ENCODE measurements at regions of chr1 and their contacts with region 1.

Region 1: DNA sequence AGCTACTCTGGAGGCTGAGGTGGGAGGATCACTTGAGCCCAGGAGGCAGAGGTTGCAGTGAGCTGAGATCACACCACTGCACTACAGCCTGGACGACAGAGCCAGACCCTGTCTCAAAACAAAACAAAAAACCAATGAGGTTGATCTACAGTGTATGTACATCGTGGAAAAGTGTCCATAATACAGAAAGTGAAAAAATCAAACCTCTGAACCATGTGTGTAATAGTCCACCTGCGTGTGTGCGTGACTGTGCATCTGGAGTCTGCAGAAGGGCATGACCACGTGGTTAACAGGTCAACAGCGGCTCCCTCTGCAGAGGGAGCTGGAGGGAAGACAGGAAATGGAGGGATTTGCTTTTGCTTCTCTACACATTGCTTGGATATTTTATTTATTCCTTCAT is 32.4 kb upstream of the ENO1 start:
- DNase-seq: no peak
- H3K4me3 Mint-ChIP-seq: no peak overlapping the region
- H3K27ac Mint-ChIP-seq: no peak overlapping the region
- H3K4me1 Mint-ChIP-seq: peaks cover 3% of the 10 kb centered on the region
- H3K27me3 Mint-ChIP-seq: peaks cover 3% of the 10 kb centered on the region

Region 2: GRCh38 chr1:8970870-8971337 is 60.0 kb after region 1 on chr1:
- CTCF ChIA-PET with region 1: no interaction called
- POLR2A ChIA-PET with region 1: no interaction called
- intact Hi-C with region 1: loop called (anchors 5 kb)
- DNase-seq: peak; percentile 73
- H3K4me3 Mint-ChIP-seq: peak overlapping the region; percentile 91
- H3K27ac Mint-ChIP-seq: peak overlapping the region; percentile 87
- H3K4me1 Mint-ChIP-seq: peaks cover 42% of the 10 kb centered on the region
- H3K27me3 Mint-ChIP-seq: no peaks in the 10 kb centered on the region